ENCODE measurements at regions of chr21 and their contacts with region 1.

Region 1: GRCh38 chr21:34986561-34987500 is 62.3 kb downstream of the RUNX1 start:
- DNase-seq: peak; percentile 66
- H3K4me3 Mint-ChIP-seq: peak overlapping the region; percentile 75
- H3K27ac Mint-ChIP-seq: peak overlapping the region; percentile 94
- H3K4me1 Mint-ChIP-seq: peaks cover 87% of the 10 kb centered on the region
- H3K27me3 Mint-ChIP-seq: no peaks in the 10 kb centered on the region

Region 2: DNA sequence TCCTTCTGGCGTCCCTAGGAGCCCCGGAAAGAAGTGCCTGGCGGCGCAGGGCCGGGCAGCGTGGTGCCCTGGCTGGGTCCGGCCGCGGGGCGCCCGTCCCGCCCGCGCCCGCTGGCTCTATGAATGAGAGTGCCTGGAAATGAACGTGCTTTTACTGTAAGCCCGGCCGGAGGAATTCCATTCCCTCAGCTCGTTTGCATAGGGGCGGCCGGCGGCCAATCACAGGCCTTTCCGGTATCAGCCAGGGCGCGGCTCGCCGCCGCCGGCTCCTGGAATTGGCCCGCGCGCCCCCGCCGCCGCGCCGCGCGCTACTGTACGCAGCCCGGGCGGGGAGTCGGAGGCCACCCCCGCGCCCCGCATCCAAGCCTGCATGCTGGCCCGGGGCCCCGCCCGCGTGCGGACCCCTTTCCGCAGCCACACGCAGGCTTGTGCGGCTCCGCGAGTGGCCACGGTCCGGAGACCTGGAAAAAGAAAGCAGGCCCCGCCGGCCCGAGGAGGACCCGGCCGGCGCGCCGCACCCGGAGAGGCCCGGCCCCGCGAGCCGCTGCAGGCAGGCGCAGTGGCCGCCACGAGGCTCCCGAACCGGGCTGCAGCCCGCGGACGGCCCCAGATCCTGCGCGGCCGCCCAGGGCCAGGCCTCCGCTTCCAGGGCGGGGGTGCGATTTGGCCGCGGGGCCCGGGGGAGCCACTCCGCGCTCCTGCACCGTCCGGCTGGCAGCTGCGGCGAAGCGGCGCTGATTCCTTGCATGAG is 98.1 kb before region 1 on chr21:
- intact Hi-C with region 1: loop called (anchors 1 kb)
- DNase-seq: peak; percentile 81
- H3K4me3 Mint-ChIP-seq: peak overlapping the region; percentile 98
- H3K27ac Mint-ChIP-seq: peak overlapping the region; percentile 100
- H3K4me1 Mint-ChIP-seq: peaks cover 36% of the 10 kb centered on the region
- H3K27me3 Mint-ChIP-seq: no peaks in the 10 kb centered on the region

Region 3: DNA sequence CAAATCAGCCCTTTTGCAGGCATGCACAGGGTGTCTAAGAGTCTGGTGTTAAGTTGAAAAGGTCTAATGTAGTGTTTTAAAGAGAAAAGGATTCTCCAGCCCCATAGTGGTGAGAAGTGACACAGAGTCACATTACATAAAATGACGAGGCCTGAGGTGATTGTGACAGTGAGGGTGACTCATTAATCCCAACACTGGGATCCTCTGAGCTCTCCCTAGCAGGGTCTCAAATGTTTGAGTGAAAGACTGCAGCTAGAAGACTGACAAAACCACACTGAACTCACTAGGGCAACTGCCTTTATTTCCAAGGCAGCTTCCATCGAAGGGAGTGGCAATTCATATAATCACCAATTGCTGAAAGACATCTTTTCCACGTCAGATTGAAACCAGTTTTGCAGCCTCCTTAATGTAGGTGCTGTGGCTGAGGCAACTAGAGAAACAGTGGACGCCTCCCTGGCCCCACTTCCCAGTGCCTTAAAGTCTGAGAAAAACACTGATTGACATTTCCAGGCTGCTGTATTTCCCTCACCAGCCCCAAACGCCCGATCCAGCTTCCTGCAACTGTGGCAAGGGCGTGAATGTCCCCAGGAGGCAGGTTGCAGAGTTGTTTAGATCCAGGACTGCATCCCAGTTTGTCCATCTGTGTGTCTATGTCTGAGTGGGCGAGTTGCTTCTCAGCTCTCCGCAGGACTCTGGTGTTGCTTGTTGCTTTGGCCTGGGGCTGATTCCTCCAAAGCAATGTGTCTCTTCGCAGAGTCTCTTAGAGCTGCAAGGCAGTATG is 19.1 kb before region 1 on chr21:
- intact Hi-C with region 1: loop called (anchors 1 kb)
- DNase-seq: peak; percentile 41
- H3K4me3 Mint-ChIP-seq: peak overlapping the region; percentile 69
- H3K27ac Mint-ChIP-seq: peak overlapping the region; percentile 99
- H3K4me1 Mint-ChIP-seq: peaks cover 82% of the 10 kb centered on the region
- H3K27me3 Mint-ChIP-seq: no peaks in the 10 kb centered on the region

Region 4: DNA sequence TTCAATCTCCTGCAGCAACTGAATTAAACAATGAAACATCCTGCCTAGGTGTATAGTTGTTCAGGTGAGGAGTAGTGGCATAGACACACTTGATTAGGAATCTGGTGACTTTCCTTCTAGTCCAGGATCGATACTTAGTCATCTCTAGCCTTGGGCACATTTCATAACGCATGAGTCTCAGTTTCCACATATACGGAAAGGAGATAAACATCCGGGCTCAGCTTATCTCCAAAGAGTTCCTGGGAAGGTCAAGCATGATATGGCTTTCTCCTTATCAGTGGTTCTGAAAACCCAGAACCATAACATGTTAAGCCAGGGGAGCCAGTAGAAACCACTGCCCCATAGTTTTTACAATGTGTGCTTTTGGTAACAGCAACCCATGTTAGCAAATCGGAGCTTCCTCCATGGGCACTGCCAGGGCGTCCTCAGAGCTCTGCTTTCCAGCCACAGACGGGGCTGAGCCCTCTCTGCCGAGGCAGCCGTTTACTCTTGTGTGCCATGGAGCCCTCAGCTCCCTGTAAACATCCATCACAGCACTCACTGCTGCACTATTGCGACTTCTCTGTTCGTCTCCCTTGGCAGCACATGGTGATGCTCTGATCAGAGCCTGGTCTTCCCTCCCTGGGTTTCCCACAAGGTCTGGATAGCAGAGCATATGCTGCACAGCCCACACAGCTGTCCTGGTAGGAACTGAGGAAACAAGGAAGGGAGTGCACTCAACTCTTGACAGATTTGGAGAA is 27.6 kb after region 1 on chr21:
- intact Hi-C with region 1: loop called (anchors 1 kb)
- DNase-seq: no peak
- H3K4me3 Mint-ChIP-seq: peak overlapping the region; percentile 40
- H3K27ac Mint-ChIP-seq: peak overlapping the region; percentile 87
- H3K4me1 Mint-ChIP-seq: peaks cover 83% of the 10 kb centered on the region
- H3K27me3 Mint-ChIP-seq: no peaks in the 10 kb centered on the region

Region 5: DNA sequence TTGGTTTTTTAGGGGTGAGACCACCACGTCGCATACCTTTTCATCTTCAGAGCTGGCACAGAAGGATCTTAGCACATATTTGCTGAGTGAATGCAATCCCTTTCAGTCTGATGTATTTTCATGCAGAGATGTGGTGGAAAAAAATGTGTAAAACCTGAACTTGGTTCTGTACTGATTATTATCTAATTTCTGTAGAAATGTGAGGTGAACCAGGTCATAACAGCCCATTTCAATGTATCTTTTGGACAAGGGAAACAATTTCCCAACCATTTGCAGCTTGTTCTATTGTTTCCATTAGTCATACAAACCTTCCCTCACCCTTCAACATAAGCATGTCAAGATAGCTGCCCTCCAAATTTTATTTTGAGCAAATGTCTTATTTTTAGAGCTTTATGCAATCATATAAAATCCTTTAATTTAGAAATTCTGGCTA is 109.0 kb after region 1 on chr21:
- intact Hi-C with region 1: loop called (anchors 2 kb)
- DNase-seq: no peak
- H3K4me3 Mint-ChIP-seq: no peak overlapping the region
- H3K27ac Mint-ChIP-seq: peak overlapping the region; percentile 93
- H3K4me1 Mint-ChIP-seq: peaks cover 65% of the 10 kb centered on the region
- H3K27me3 Mint-ChIP-seq: no peaks in the 10 kb centered on the region

Region 6: DNA sequence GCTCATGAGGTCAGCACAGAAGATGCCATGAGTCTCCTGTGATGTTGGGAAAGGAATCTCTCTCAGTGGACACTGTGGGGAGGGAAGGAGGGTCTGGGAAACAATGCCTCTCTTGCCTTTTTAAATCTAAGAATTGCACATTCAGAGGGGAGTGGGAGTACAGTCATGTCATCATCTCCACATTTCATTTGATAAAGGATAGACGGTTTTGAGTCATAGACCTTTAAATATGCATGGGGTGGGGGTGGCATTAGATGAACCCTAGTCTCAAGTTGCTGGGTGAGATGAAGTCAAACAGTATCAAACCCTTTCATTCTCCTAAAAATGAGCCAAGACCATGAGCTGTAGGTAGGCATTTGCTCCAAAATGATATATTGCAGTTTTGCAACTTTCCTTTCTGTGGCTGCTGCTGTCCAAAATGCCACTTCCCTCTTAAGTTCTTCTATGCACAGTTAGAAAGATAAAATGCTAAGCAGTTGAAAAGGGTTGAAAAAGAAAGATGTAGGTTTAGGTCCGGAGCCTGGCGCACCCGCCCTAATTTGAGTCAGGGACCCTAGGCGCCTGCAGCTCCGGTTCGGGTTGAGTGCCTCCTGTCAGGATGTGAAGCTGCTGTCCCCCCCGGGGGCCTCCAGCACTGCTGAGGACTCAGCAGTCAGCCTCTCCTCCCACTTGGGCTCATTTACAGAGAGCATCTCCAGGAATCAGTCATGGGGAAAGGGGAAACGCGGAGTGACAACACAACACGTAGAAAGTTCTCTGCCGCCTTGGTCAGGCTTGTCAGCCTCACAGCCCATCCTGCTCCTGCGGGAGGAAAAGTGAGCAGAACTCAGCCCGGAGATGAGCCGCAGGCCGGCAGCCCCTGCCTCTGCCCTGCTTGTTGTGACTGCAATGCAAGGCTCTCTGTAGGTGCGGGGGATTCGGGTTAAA is 541.5 kb after region 1 on chr21:
- intact Hi-C with region 1: loop called (anchors 10 kb)
- DNase-seq: peak; percentile 26
- H3K4me3 Mint-ChIP-seq: peak overlapping the region; percentile 85
- H3K27ac Mint-ChIP-seq: peak overlapping the region; percentile 95
- H3K4me1 Mint-ChIP-seq: peaks cover 53% of the 10 kb centered on the region
- H3K27me3 Mint-ChIP-seq: no peaks in the 10 kb centered on the region